ENCODE measurements at regions of chr20 and their contacts with region 1.

Region 1: DNA sequence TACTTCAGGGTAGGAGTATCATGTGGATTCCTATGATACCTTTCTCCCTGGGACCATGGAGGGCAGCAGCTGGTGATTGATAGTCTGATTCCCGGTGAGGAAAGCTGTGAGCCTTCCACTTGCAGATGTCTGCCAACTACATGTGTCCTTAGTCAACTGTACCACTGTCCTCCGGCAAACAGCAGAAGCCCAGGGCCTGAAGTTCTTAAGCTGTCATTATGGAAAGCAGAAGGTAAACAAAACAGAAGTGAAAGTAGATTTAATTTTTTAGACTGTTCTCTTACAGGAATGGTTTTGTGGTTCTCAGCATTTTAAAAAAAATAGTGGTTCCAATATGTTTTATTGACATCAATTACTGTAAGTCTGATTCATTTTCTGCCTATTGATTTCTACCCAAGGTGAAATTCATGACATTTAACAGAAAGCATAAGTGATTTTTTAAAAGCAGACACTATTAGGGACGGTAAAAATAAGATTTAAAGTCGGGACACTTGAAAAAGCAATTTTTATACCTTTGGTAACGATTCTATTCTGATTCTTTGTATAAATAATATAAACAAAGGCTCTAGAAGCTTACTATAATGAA is 36.6 kb downstream of the PTPN1 start:
- DNase-seq: peak; percentile 81
- H3K4me3 Mint-ChIP-seq: peak overlapping the region; percentile 77
- H3K27ac Mint-ChIP-seq: peak overlapping the region; percentile 90
- H3K4me1 Mint-ChIP-seq: peaks cover 54% of the 10 kb centered on the region
- H3K27me3 Mint-ChIP-seq: no peaks in the 10 kb centered on the region

Region 2: GRCh38 chr20:50518270-50518721 is 28.5 kb before region 1 on chr20:
- intact Hi-C with region 1: loop called (anchors 2 kb)
- DNase-seq: peak; percentile 74
- H3K4me3 Mint-ChIP-seq: peak overlapping the region; percentile 85
- H3K27ac Mint-ChIP-seq: peak overlapping the region; percentile 94
- H3K4me1 Mint-ChIP-seq: peaks cover 76% of the 10 kb centered on the region
- H3K27me3 Mint-ChIP-seq: no peaks in the 10 kb centered on the region